Left colon (tissue), 2 donors: ENCODE measurements at regions of chr4 and their contacts with region 1.

Region 1: DNA sequence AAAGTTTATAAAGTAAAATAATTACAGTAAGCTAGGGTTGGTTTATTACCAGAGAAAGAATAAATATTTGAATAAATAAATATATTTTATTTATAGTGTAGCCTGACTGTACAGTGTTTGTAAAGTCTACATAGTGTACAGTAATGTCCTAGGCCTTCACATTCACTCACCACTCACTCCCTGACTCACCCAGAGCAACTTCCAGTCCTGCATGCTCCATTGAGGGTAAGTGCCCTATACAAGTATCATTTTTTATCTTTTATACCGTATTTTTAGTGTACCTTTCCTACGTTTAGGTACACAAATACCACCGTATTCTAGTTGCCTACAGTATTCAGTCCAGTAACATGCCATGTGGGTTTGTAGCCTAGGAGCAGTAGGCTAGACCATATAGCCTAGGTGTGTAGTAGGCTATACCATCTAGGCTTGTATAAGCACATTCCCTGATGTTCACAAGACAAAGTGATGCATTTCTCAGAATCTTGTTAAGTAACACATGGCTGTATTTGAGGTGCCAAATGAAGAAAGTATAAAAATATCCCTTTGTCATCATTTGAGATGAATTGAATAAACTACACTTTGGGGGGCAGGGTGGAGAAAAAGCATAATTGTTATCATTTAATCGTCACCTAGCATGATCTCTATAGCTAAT is 14.7 kb upstream of the KLHL8 start:
- DNase-seq: no peak
- ATAC-seq: peak; percentile 28

Region 2: DNA sequence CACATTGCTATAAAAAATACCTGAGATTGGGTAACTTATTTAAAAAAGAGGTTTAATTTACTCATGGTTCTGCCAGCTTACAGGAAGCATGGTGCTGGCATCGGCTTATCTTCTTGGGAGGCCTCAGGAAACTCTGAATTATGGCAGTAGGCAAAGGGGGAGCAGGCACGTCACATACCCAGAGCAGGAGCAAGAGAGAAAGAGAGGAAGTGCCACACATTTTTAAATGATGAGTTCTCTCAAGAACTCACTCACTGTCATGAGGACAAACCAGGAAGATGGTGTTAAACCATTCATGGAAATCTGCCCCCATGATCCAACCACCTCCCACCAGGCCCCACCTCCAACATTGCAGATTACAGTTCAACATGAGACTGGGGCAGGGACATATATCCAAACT is 310.3 kb before region 1 on chr4:
- intact Hi-C with region 1: loop called in 1 of 2 experiments (anchors 5 kb)
- DNase-seq: no peak
- ATAC-seq: no peak

Region 3: GRCh38 chr4:87150498-87151261 is 84.5 kb before region 1 on chr4:
- intact Hi-C with region 1: loop called (anchors 2 to 10 kb)
- DNase-seq: peak in 1 of 2 donors; percentile 22
- ATAC-seq: peak; percentile 80

Region 4: GRCh38 chr4:87783781-87784180 is 548.6 kb after region 1 on chr4:
- intact Hi-C with region 1: no loop called
- DNase-seq: no peak
- ATAC-seq: no peak